MCF 10A (cell line): ENCODE measurements at regions of chr1 and their contacts with region 1.

Region 1: DNA sequence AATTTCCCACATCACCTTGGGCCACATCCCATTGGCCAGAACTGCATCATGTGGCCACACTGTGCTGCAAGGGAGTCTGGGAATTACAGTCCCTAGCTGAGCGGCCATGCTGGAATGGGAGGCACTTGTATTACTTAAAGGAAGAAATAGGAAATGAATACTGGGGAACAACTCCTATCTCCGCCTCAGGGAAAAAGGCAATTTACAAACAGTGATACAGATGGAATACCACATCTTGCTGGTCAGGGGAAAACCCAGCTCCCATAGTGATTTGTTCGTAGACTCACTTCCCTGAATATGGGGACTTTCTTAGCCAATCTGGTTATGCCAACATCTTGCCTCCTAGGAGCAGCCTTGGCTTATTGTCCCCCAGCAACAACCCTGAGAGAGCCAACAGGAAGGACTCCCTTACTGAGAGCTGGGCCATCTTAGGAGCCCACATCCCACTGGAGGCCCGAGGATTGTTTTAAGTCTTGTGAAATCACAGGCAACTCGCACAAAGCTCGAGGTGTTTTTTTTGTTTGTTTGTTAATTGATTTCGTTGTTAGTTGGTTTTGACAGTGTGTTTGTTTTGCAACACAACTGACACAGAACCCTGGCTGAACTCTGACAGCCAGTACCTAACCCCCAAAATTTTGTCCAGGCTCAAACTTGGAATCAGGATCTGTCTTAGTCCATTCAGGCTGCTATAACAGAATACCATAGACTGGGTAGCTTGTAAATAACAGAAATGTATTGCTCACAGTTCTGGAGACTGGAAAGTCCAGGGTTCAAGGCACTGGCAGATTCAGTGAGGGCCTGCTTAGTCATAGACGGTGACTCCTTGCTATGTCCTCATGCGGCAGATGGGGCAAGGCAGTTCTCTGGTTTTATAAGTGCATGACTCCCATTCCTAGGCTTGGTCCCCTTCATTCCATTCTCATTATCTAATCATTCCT is 14.9 kb downstream of the CDA start:
- DNase-seq: peak; percentile 85
- H3K4me3 Mint-ChIP-seq: no peak overlapping the region
- H3K27ac Mint-ChIP-seq: peak overlapping the region; percentile 68
- H3K4me1 Mint-ChIP-seq: peaks cover 44% of the 10 kb centered on the region
- H3K27me3 Mint-ChIP-seq: no peaks in the 10 kb centered on the region
- CTCF ChIP-seq: no peak

Region 2: GRCh38 chr1:20265250-20265649 is 338.5 kb before region 1 on chr1:
- CTCF ChIA-PET with region 1: no interaction called
- POLR2A ChIA-PET with region 1: no interaction called
- intact Hi-C with region 1: no loop called
- DNase-seq: no peak
- H3K4me3 Mint-ChIP-seq: no peak overlapping the region
- H3K27ac Mint-ChIP-seq: no peak overlapping the region
- H3K4me1 Mint-ChIP-seq: no peaks in the 10 kb centered on the region
- H3K27me3 Mint-ChIP-seq: peaks cover 22% of the 10 kb centered on the region
- CTCF ChIP-seq: no peak

Region 3: GRCh38 chr1:20507564-20508410 is 96.0 kb before region 1 on chr1 and contains the start of gene MUL1:
- CTCF ChIA-PET with region 1: no interaction called
- POLR2A ChIA-PET with region 1: no interaction called
- intact Hi-C with region 1: no loop called
- DNase-seq: peak; percentile 90
- H3K4me3 Mint-ChIP-seq: peak within 1 kb of the TSS; percentile 89
- H3K27ac Mint-ChIP-seq: peak within 1 kb of the TSS; percentile 98
- H3K4me1 Mint-ChIP-seq: peaks cover 11% of the 10 kb centered on the region
- H3K27me3 Mint-ChIP-seq: no peaks in the 10 kb centered on the region
- CTCF ChIP-seq: no peak
- total RNA-seq, gene MUL1: 23.4 and 29.9 TPM in 2 replicates

Region 4: DNA sequence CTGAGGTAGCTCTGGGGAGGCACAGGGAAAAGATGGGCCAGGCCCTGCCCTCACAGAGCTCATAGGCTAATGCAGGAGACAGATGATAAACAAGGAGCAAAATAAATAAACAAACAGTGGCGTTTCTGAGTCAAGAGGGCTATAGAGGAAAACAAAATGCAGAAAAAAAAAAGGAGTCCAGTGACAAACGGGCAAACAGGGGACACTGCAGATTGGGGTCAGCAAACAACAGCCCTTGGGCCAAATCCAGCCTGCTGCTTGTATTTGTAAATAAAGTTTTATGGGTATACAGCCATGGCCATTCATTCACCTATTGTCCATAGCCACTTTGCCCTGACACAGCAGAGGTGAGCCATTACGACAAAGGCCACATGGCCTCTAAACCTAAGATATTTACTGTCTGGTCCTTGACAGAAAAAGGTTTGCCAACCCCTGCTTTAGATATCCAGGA is 10.4 kb after region 1 on chr1:
- CTCF ChIA-PET with region 1: no interaction called
- POLR2A ChIA-PET with region 1: interaction called, 12 read pairs
- intact Hi-C with region 1: no loop called
- DNase-seq: no peak
- H3K4me3 Mint-ChIP-seq: no peak overlapping the region
- H3K27ac Mint-ChIP-seq: peak overlapping the region; percentile 91
- H3K4me1 Mint-ChIP-seq: peaks cover 22% of the 10 kb centered on the region
- H3K27me3 Mint-ChIP-seq: no peaks in the 10 kb centered on the region
- CTCF ChIP-seq: no peak

Region 5: GRCh38 chr1:20640183-20640597 is 36.4 kb after region 1 on chr1:
- CTCF ChIA-PET with region 1: no interaction called
- POLR2A ChIA-PET with region 1: no interaction called
- intact Hi-C with region 1: no loop called
- DNase-seq: peak; percentile 66
- H3K4me3 Mint-ChIP-seq: no peak overlapping the region
- H3K27ac Mint-ChIP-seq: no peak overlapping the region
- H3K4me1 Mint-ChIP-seq: peaks cover 6% of the 10 kb centered on the region
- H3K27me3 Mint-ChIP-seq: no peaks in the 10 kb centered on the region
- CTCF ChIP-seq: peak; percentile 72